ENCODE measurements at regions of chr5 and their contacts with region 1.

Region 1: GRCh38 chr5:129852747-129853352 is 51.4 kb upstream of the CHSY3 start:
- DNase-seq: peak; percentile 77
- ATAC-seq: peak; percentile 96
- H3K4me3 ChIP-seq: no peak overlapping the region
- H3K27ac ChIP-seq: no peak overlapping the region
- H3K4me1 ChIP-seq: peaks cover 4% of the 10 kb centered on the region; the same call in 1 of the 2 replicates
- H3K27me3 ChIP-seq: peaks cover 4% of the 10 kb centered on the region; the same call in 1 of the 2 replicates
- CTCF ChIP-seq: peak; percentile 93

Region 2: DNA sequence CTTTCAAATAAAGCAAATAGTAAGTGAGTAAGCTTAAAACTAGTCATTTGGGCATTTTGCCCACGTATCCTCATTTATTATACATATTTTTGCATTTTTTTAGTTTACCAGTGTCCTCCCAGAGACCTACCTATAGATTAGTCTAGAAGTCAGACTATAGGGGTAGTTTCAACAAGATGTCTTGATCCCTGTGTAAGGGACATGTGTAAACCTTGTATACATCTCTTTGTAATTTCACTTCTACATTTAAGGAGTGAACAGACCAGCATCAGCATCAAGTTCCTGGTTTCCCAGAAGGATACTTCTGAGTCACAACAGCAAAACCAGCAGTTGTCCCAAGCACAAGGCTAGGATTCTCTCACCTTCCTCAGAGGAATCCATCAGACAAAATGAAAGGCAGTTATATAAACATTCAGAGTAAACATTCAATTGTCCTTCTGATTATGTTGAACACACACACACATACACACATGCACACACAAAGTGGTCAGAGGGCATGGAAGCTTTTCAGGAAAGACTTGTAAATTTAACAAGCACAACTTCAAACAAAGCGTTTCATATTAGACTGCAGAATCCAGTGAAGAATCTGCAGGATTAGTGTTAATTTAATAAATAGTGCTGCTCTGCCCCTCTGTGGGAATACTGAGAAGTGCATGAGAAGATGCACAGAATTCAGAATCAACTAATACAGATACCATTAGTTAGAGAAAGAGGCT is 1256.8 kb after region 1 on chr5:
- CTCF ChIA-PET with region 1: no interaction called
- POLR2A ChIA-PET with region 1: no interaction called
- intact Hi-C with region 1: loop called (anchors 2 kb)
- DNase-seq: peak; percentile 64
- ATAC-seq: peak; percentile 81
- H3K4me3 ChIP-seq: no peak overlapping the region
- H3K27ac ChIP-seq: no peak overlapping the region
- H3K4me1 ChIP-seq: no peaks in the 10 kb centered on the region; the same call in 1 of the 2 replicates
- H3K27me3 ChIP-seq: no peaks in the 10 kb centered on the region
- CTCF ChIP-seq: peak; percentile 74

Measured in PC-3 (cell line).